ENCODE measurements at regions of chr10 and their contacts with region 1.

Region 1: GRCh38 chr10:102352066-102352715 is 43.3 kb upstream of the NFKB2 start:
- DNase-seq: peak; percentile 81
- H3K4me3 ChIP-seq: no peak overlapping the region
- H3K27ac ChIP-seq: no peak overlapping the region
- H3K4me1 ChIP-seq: peaks cover 0 to 3% (median 0%) of the 10 kb centered on the region in 6 donors
- H3K27me3 ChIP-seq: no peaks in the 10 kb centered on the region
- CTCF ChIP-seq: peak; percentile 67 to 92 (median 85)
- POLR2A ChIP-seq: no peak

Region 2: DNA sequence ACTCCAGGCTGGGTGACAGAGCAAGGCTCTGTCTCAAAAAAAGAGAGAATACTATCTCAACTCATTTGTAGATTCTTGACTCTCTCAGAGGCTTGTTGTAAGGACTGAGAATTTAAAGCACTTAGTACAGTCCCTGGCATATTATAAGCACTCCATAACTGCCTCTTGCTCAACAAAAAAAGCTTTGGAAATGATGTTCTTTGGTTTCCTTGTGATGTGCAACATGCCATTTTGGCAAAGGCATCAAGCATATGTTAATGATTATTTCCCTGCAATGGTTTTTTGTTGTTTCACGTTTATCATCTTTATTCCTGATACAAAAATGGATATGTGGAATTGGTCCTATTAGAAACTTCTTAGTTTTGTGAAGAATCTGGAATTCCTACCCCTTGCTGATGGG is 184.3 kb before region 1 on chr10:
- intact Hi-C with region 1: loop called (anchors 5 kb)
- DNase-seq: no peak
- H3K4me3 ChIP-seq: no peak overlapping the region
- H3K27ac ChIP-seq: no peak overlapping the region
- H3K4me1 ChIP-seq: peaks cover 6 to 31% (median 14%) of the 10 kb centered on the region in 6 donors
- H3K27me3 ChIP-seq: no peaks in the 10 kb centered on the region
- CTCF ChIP-seq: no peak
- POLR2A ChIP-seq: no peak

Region 3: DNA sequence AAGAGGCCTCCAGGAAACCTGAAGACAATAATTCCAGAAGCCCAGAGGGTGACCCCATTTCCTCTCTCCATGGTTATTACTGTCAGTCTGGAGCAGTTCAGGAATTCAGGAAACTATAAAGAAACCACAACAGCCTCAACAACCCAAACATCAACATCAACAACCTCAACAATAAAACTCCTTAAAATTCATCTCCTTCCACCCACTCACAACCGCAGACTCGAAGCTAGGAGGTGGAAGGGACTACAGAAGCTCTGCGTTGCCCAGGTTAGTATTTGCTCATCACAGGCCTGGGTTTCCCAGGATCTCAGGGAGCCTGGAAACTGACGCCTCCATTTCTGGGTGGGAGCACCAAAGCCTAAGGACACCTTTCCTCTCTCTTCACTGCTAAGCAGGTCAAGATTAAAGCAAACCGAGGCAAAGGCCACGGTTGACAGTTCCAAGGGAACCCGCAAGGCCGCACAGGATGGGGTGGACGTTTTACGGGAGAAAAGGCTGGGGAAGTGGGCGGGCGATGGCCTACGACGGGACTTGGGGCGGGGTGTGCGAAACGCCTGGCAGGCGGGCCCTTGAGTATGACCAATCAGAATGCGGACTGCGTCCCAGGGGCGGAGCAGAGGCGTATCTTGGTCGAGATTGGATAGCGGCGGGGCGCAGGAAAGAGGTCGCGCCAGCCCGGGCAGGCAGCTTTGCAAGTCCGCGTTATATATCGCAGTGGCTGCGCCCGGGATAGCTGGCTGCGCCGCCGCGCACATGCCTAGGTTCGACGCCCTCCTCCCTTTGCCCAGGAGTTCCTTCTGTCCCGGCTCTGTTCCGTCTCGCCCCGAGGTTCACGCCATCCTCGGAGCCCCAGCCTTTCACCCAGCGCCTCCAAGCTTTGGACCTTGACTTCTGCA is 126.3 kb before region 1 on chr10 and contains the start of gene ELOVL3:
- intact Hi-C with region 1: loop called (anchors 5 kb)
- DNase-seq: peak; percentile 94
- H3K4me3 ChIP-seq: peak within 1 kb of the TSS in 7 of 8 donors; percentile 22 to 67 (median 40)
- H3K27ac ChIP-seq: peak within 1 kb of the TSS; percentile 11 to 80 (median 76)
- H3K4me1 ChIP-seq: peaks cover 19 to 46% (median 35%) of the 10 kb centered on the region in 6 donors
- H3K27me3 ChIP-seq: peaks cover 0 to 57% (median 17%) of the 10 kb centered on the region in 7 donors
- CTCF ChIP-seq: peak in 4 of 11 experiments; percentile 10 to 53 (median 23)
- POLR2A ChIP-seq: no peak
- total RNA-seq, gene ELOVL3: 0.26 to 2.0 (median 0.64) TPM in 5 of 7 donors, not detected in the others

Measured in spleen (tissue), 13 donors.